ENCODE measurements at regions of chr4 and their contacts with region 1.

Region 1: DNA sequence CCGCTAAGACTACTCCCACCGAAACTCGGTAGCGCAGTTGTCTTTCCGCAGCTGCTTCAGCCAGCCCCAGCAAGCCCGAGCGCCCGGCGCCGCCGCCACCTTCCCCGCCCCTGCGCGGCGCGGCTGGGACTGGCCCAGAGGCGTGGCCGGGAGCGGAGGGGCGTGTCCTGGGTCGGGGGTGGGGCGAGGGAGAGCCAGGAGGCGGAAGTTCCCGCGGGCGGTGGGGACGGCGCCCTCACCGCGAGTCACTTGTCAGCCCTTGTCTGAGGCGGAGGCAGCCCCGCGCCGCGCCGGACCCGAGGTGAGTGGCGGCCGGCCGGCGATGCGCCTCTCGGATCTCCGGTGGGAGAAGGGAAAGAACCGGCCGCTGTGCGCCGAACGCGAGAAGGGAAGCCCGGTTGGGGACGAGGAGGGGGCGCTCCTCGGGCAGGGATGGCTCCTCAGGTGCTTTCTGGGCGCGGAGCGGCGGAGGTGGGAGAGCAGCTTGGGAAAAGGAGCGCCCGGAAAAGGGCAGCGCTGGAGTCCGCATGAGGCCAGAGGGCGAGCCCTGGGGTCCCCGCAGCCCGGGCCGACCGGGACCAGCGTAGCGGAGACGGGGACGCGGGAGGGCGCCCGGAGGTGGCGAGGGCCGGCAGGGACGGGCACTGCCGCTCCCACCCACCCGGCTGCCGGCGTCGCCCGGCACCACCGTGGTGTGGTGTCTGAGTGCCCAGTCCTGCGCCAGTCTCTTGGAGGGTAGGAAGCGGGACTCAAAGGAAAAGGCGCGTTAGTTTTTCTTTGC is at the start of gene PDLIM5:
- DNase-seq: peak; percentile 68 to 85
- H3K4me3 ChIP-seq: peak within 1 kb of the TSS; percentile 98
- H3K27ac ChIP-seq: peak within 1 kb of the TSS; percentile 80
- H3K4me1 ChIP-seq: peaks cover 26% of the 10 kb centered on the region
- H3K27me3 ChIP-seq: no peaks in the 10 kb centered on the region
- CTCF ChIP-seq: no peak
- total RNA-seq, gene PDLIM5: 121 and 130 TPM in 2 replicates

Region 2: GRCh38 chr4:94406668-94407437 is 45.0 kb before region 1 on chr4:
- CTCF ChIA-PET with region 1: interaction called, 4 read pairs
- POLR2A ChIA-PET with region 1: interaction called, 5 read pairs
- intact Hi-C with region 1: loop called (anchors 2 kb)
- DNase-seq: peak; percentile 43 to 50
- H3K4me3 ChIP-seq: no peak overlapping the region
- H3K27ac ChIP-seq: no peak overlapping the region
- H3K4me1 ChIP-seq: peaks cover 5% of the 10 kb centered on the region
- H3K27me3 ChIP-seq: no peaks in the 10 kb centered on the region
- CTCF ChIP-seq: peak; percentile 78

Region 3: DNA sequence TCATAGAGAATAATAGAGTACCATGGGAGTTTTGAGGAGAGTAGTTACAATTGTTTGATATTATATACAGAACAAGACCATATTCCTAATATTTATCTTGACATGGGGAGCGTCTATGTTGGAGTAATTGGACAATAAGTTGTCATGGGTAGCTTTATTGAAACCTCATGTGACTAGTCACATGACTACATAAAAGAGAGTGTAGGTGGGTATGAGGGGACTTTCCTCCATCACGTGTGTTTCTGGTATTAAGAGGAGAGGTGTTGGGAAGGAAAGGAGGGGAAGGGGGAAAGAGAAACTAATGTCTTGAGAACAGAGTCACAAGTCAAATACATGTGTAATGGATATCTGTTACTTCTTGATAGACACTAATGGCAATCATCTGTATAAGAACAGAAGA is 32.9 kb after region 1 on chr4:
- CTCF ChIA-PET with region 1: no interaction called
- POLR2A ChIA-PET with region 1: interaction called, 4 read pairs
- intact Hi-C with region 1: loop called (anchors 2 kb)
- DNase-seq: no peak
- H3K4me3 ChIP-seq: no peak overlapping the region
- H3K27ac ChIP-seq: no peak overlapping the region
- H3K4me1 ChIP-seq: no peaks in the 10 kb centered on the region
- H3K27me3 ChIP-seq: no peaks in the 10 kb centered on the region
- CTCF ChIP-seq: no peak

Region 4: DNA sequence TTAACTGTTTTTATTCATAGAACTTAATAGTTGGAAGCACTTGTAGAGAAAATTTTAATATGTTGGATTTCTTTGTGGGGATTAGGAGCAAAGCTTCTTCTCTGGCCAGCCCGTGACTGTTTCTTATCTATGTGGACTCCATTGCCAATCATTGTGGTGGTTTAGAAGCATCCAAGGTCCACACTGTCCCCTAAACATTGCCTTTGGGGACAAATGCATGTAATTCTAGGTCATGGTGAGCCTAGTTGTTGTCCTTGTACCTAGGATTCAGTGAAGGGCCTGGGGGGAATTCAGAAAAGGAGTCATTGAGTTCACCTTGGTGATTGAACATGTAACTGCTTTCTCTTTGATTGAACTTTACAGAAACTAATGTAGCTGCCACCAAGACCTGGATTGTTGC is 108.0 kb after region 1 on chr4:
- CTCF ChIA-PET with region 1: interaction called, 15 read pairs
- POLR2A ChIA-PET with region 1: interaction called, 4 read pairs
- intact Hi-C with region 1: no loop called
- DNase-seq: no peak
- H3K4me3 ChIP-seq: no peak overlapping the region
- H3K27ac ChIP-seq: no peak overlapping the region
- H3K4me1 ChIP-seq: peaks cover 21% of the 10 kb centered on the region
- H3K27me3 ChIP-seq: no peaks in the 10 kb centered on the region
- CTCF ChIP-seq: no peak

Region 5: GRCh38 chr4:94595879-94596483 is 144.1 kb after region 1 on chr4:
- CTCF ChIA-PET with region 1: no interaction called
- POLR2A ChIA-PET with region 1: no interaction called
- intact Hi-C with region 1: loop called (anchors 5 kb)
- DNase-seq: peak in 1 of 2 experiments; percentile 53
- H3K4me3 ChIP-seq: no peak overlapping the region
- H3K27ac ChIP-seq: no peak overlapping the region
- H3K4me1 ChIP-seq: no peaks in the 10 kb centered on the region; the same call in 1 of the 2 replicates
- H3K27me3 ChIP-seq: no peaks in the 10 kb centered on the region
- CTCF ChIP-seq: peak; percentile 77

Measured in PC-9 (cell line).